ENCODE measurements at regions of chr17 and their contacts with region 1.

Region 1: DNA sequence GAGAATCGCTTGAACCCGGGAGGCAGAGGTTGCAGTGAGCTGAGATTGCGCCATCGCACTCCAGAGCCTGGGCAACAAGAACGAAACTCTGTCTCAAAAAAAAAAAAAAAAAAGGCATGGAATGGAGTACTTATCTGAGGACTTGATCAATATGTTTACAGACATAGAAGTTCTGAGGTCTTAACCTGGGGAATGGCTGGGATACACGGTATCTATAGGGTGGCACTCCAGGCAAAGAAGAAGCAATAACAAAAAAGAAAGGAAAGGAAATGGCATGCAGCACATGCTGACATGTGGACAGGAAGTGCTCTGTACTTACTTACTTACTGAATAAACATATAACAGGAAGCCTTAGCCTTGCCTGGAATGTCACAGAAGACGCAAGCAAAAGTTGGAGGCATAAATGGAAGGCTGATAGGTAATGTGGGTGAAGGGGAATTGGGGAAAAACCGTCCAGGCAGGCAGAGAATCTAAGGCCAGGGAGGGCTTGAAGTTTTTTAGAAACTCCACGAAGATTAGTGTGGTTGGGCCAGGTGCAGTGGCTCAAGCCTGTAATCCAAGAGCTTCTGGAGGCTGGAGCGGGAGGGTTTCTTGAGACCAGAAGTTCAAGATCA is 10.1 kb upstream of the SPOP start:
- DNase-seq: peak in 9 of 35 experiments; percentile 13 to 65 (median 21)
- ATAC-seq: peak; percentile 89 to 98 (median 96)
- H3K4me3 ChIP-seq: peak overlapping the region; percentile 45 to 57
- H3K4me3 Mint-ChIP-seq: peak overlapping the region; percentile 75 to 83 (median 82)
- H3K27ac ChIP-seq: peak overlapping the region; percentile 82
- H3K27ac Mint-ChIP-seq: peak overlapping the region; percentile 92 to 96
- H3K4me1 ChIP-seq: peaks cover 22 to 45% of the 10 kb centered on the region in 2 experiments
- H3K4me1 Mint-ChIP-seq: peaks cover 43 to 51% (median 49%) of the 10 kb centered on the region in 3 donors
- H3K27me3 ChIP-seq: no peaks in the 10 kb centered on the region
- H3K27me3 Mint-ChIP-seq: no peaks in the 10 kb centered on the region

Region 2: DNA sequence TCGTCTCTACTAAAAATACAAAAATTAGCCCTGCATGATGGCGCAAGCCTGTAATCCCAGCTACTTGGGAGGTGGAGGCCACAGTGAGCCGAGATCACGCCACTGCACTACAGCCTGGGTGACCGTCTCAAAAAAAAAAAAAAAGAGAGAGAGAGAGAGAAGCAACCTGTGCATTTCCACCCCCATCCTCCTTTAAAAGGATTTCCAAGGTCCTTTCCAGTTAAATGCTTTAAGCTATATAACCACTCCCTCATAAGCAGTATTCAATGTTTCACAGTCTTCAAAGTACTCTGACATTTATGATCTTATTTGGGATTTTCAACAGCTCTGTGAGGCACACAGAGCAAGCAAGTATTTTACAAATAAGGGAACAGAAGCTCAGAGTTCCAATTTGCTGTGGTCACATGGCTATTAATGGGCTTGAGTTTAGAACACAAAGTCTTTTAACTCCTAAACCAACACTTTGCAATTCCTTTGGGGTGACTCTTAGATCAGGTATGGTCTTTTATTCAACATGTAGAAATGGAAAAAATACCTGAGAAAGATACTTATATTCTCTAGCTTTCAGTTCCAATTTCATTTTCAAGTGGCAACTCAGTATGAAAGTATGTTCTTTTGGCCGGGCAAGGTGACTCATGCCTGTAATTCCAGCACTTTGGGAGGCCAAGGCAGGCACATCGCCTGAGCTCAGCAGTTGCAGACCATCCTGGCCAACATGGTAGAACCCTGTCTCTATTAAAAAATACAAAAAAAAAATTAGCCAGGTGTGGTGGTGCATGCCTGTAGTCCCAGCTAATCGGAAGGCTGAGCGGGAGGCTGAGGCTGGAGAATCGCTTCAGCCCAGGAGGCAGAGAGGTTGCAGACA is 41.4 kb before region 1 on chr17:
- CTCF ChIA-PET with region 1: interaction called, 5 to 11 read pairs
- POLR2A ChIA-PET with region 1: no interaction called
- DNase-seq: no peak
- ATAC-seq: no peak
- H3K4me3 ChIP-seq: no peak overlapping the region
- H3K4me3 Mint-ChIP-seq: no peak overlapping the region
- H3K27ac ChIP-seq: no peak overlapping the region
- H3K27ac Mint-ChIP-seq: no peak overlapping the region
- H3K4me1 ChIP-seq: peaks cover 6 to 12% of the 10 kb centered on the region in 2 experiments
- H3K4me1 Mint-ChIP-seq: peaks cover 59 to 78% (median 59%) of the 10 kb centered on the region in 3 donors
- H3K27me3 ChIP-seq: no peaks in the 10 kb centered on the region
- H3K27me3 Mint-ChIP-seq: no peaks in the 10 kb centered on the region

Region 3: GRCh38 chr17:49753959-49754391 is 66.0 kb after region 1 on chr17:
- CTCF ChIA-PET with region 1: no interaction called
- POLR2A ChIA-PET with region 1: interaction called, 4 to 15 read pairs
- DNase-seq: no peak
- ATAC-seq: no peak
- H3K4me3 ChIP-seq: no peak overlapping the region
- H3K4me3 Mint-ChIP-seq: peak overlapping the region in 2 of 3 donors; percentile 6 to 27
- H3K27ac ChIP-seq: peak overlapping the region; percentile 24
- H3K27ac Mint-ChIP-seq: peak overlapping the region; percentile 86 to 96
- H3K4me1 ChIP-seq: peaks cover 25 to 86% of the 10 kb centered on the region in 2 experiments
- H3K4me1 Mint-ChIP-seq: peaks cover 62 to 84% (median 81%) of the 10 kb centered on the region in 3 donors
- H3K27me3 ChIP-seq: no peaks in the 10 kb centered on the region
- H3K27me3 Mint-ChIP-seq: no peaks in the 10 kb centered on the region